Activated B cell treated with CpG ODN at 0.5 μM for 24 hours (primary cell): ENCODE measurements at regions of chrX and their contacts with region 1.

Region 1: GRCh38 chrX:21839334-21840192 is at the start of gene MBTPS2:
- DNase-seq: peak; percentile 75
- ATAC-seq: peak; percentile 92
- H3K4me3 Mint-ChIP-seq: peak within 1 kb of the TSS; percentile 90
- H3K27ac Mint-ChIP-seq: peak within 1 kb of the TSS; percentile 86
- H3K4me1 Mint-ChIP-seq: peaks cover 7% of the 10 kb centered on the region
- H3K27me3 Mint-ChIP-seq: no peaks in the 10 kb centered on the region
- CTCF ChIP-seq: no peak
- total RNA-seq, gene MBTPS2: 7.9 and 9.0 TPM in 2 replicates

Region 2: GRCh38 chrX:20515841-20516461 is 1323.6 kb before region 1 on chrX:
- CTCF ChIA-PET with region 1: no interaction called
- POLR2A ChIA-PET with region 1: no interaction called
- intact Hi-C with region 1: loop called (anchors 2 kb)
- DNase-seq: no peak
- ATAC-seq: peak; percentile 89
- H3K4me3 Mint-ChIP-seq: no peak overlapping the region
- H3K27ac Mint-ChIP-seq: no peak overlapping the region
- H3K4me1 Mint-ChIP-seq: peaks cover 10% of the 10 kb centered on the region
- H3K27me3 Mint-ChIP-seq: peaks cover 4% of the 10 kb centered on the region
- CTCF ChIP-seq: no peak

Region 3: DNA sequence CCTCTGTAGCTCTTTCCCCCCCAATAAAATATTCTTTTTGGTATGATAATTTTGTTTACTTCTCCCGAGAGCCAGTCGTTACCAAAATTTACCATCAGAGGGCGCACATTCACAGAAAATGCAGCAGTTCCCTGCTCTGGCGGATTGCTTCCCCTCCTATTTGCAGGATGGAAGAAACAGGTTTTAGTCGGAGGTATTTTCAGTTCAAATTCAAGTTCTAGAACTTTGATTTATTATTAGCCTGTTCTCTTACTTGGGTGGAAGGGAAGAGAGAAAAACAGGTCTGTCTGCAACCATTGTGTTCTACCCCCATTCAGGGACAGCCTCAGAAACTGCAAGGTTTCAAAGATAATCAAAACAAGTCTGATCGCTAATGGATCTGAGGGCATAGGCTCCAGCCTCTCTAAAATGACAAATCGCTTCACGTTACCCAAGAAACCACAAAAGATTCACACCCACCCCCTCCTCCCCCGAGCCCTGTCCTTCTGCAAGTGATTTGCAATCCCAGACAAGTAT is 1309.1 kb before region 1 on chrX:
- CTCF ChIA-PET with region 1: no interaction called
- POLR2A ChIA-PET with region 1: no interaction called
- intact Hi-C with region 1: loop called (anchors 2 kb)
- DNase-seq: no peak
- ATAC-seq: no peak
- H3K4me3 Mint-ChIP-seq: no peak overlapping the region
- H3K27ac Mint-ChIP-seq: no peak overlapping the region
- H3K4me1 Mint-ChIP-seq: peaks cover 1% of the 10 kb centered on the region
- H3K27me3 Mint-ChIP-seq: peaks cover 21% of the 10 kb centered on the region
- CTCF ChIP-seq: peak; percentile 32

Region 4: DNA sequence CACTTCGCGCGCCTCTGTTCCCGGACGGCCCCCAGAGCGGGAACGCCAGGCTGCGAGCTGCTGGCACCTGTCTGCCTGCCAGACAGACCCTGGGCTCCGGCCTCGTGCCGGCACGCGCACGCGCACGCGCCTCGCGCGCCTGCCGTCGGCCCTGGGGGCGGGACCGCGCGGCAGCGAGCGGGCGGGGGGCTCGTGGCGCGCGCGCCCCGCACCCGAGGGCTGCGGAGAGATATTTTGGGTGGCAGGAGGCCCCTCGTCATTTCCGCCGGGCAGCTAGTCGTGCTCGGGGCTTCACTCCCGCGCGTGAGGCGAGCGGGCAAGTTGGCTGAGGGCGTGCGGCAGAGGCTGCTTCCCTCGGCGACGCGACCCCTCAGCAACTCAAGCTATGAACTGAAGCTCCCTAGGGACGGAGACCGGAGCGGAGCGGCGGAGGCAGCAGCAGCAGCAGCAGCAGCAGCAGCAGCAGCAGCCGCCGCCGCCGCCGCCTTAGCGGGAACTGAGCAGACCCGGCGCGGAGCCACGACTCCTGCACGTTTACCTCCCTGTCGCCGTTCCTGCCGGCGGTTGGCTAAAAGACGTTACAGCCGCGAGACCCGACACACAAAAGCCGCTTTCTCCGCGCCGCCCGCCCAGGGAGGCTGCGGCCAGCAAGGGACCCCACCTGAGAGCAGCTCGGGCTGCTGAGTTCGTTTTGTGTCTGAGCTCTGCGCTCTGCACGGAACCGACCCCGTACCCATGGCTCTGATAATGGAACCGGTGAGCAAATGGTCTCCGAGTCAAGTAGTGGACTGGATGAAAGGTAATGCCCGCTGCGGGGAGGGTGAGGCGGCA is 465.2 kb before region 1 on chrX and contains the start of gene CNKSR2:
- CTCF ChIA-PET with region 1: no interaction called
- POLR2A ChIA-PET with region 1: interaction called, 7 read pairs
- intact Hi-C with region 1: loop called (anchors 5 kb)
- DNase-seq: peak; percentile 74
- ATAC-seq: peak; percentile 77
- H3K4me3 Mint-ChIP-seq: peak within 1 kb of the TSS; percentile 92
- H3K27ac Mint-ChIP-seq: peak within 1 kb of the TSS; percentile 86
- H3K4me1 Mint-ChIP-seq: peaks cover 30% of the 10 kb centered on the region
- H3K27me3 Mint-ChIP-seq: no peaks in the 10 kb centered on the region
- CTCF ChIP-seq: no peak
- total RNA-seq, gene CNKSR2: 15.6 and 15.7 TPM in 2 replicates

Region 5: GRCh38 chrX:21940356-21940829 is 100.8 kb after region 1 on chrX and contains the start of gene SMS:
- CTCF ChIA-PET with region 1: no interaction called
- POLR2A ChIA-PET with region 1: interaction called, 5 read pairs
- intact Hi-C with region 1: loop called (anchors 2 kb)
- DNase-seq: peak; percentile 41
- ATAC-seq: peak; percentile 60
- H3K4me3 Mint-ChIP-seq: peak within 1 kb of the TSS; percentile 88
- H3K27ac Mint-ChIP-seq: peak within 1 kb of the TSS; percentile 85
- H3K4me1 Mint-ChIP-seq: peaks cover 27% of the 10 kb centered on the region
- H3K27me3 Mint-ChIP-seq: no peaks in the 10 kb centered on the region
- CTCF ChIP-seq: no peak
- total RNA-seq, gene SMS: 66.3 and 69.7 TPM in 2 replicates

Region 6: DNA sequence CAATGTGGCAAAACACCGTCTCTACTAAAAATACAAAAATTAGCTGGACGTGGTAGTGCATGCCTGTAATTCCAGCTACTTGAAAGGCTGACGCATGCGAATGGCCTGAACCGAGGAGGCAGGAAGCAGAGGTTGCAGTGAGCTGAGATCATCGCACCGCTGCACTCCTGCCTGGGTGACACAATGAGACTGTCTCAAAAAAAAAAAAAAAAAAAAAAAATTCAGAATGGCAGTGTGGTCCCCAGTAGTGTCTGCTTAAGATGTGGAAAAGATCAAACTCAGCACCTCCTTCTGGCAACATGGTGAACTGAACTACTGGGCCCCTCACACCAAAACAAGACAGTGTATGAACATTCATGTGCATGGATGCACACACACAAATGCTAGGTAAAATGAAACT is 133.2 kb after region 1 on chrX:
- CTCF ChIA-PET with region 1: no interaction called
- POLR2A ChIA-PET with region 1: no interaction called
- intact Hi-C with region 1: loop called (anchors 2 kb)
- DNase-seq: no peak
- ATAC-seq: peak; percentile 56
- H3K4me3 Mint-ChIP-seq: no peak overlapping the region
- H3K27ac Mint-ChIP-seq: peak overlapping the region; percentile 72
- H3K4me1 Mint-ChIP-seq: peaks cover 27% of the 10 kb centered on the region
- H3K27me3 Mint-ChIP-seq: no peaks in the 10 kb centered on the region
- CTCF ChIP-seq: no peak

Region 7: GRCh38 chrX:22748093-22748999 is 908.8 kb after region 1 on chrX:
- CTCF ChIA-PET with region 1: no interaction called
- POLR2A ChIA-PET with region 1: no interaction called
- intact Hi-C with region 1: loop called (anchors 1 kb)
- DNase-seq: peak; percentile 14
- ATAC-seq: peak; percentile 64
- H3K4me3 Mint-ChIP-seq: no peak overlapping the region
- H3K27ac Mint-ChIP-seq: no peak overlapping the region
- H3K4me1 Mint-ChIP-seq: no peaks in the 10 kb centered on the region
- H3K27me3 Mint-ChIP-seq: no peaks in the 10 kb centered on the region
- CTCF ChIP-seq: no peak